Activated CD8-positive, alpha-beta T cell treated with anti-CD3 and anti-CD28 coated beads, Interleukin-2, amount 10 ng/mL, durations not matched to agents 7 days and 5 days (primary cell): ENCODE measurements at regions of chr11 and their contacts with region 1.

Region 1: GRCh38 chr11:288328-289144 is at the start of gene PGGHG:
- DNase-seq: peak; percentile 80
- ATAC-seq: peak; percentile 51
- H3K4me3 Mint-ChIP-seq: peak within 1 kb of the TSS; percentile 94
- H3K27ac Mint-ChIP-seq: peak within 1 kb of the TSS; percentile 97
- H3K4me1 Mint-ChIP-seq: peaks cover 61% of the 10 kb centered on the region
- H3K27me3 Mint-ChIP-seq: peaks cover 2% of the 10 kb centered on the region
- total RNA-seq, gene PGGHG: 487 to 541 TPM

Region 2: DNA sequence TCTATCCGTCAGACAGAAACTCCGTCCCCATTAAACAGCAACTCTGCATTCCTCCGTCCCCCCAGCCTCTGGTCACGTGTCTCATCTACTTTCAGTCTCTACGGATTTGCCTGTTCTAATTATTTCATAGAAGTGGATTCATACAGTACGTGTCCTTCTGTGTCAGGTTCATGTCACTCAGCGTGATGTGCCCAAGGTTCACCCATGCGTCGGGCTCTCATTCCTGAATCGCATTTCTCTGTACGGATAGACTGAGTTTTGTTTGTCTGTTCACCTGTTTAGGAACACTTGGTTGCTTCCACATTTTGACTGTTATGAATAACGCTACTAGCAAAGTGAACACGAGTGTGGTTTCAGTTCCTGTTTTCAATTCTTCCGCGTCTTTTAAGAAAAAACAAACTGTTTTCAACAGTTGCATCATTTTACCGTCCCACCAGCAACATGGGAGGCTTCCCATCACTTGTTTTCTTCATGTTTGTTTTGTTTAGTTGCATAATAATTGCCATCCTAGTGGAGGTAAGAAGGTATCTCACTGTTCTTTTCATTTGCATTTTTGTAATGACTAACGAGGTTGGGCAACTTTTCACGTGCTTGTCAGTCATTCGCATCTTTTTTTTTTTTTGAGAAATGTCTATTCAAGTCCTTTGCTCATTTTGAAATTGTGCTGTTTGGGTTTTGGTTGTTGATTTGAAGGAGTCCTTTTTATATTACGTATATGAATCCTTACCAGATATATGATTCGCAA is 19.2 kb before region 1 on chr11:
- CTCF ChIA-PET with region 1: interaction called, 31 read pairs
- POLR2A ChIA-PET with region 1: interaction called, 115 read pairs
- DNase-seq: peak; percentile 69
- ATAC-seq: peak; percentile 47
- H3K4me3 Mint-ChIP-seq: peak overlapping the region; percentile 75
- H3K27ac Mint-ChIP-seq: peak overlapping the region; percentile 92
- H3K4me1 Mint-ChIP-seq: peaks cover 35% of the 10 kb centered on the region
- H3K27me3 Mint-ChIP-seq: peaks cover 2% of the 10 kb centered on the region

Region 3: GRCh38 chr11:299951-300735 is 11.6 kb after region 1 on chr11:
- CTCF ChIA-PET with region 1: interaction called, 11 read pairs
- POLR2A ChIA-PET with region 1: interaction called, 97 read pairs
- DNase-seq: no peak
- ATAC-seq: no peak
- H3K4me3 Mint-ChIP-seq: no peak overlapping the region
- H3K27ac Mint-ChIP-seq: peak overlapping the region; percentile 46
- H3K4me1 Mint-ChIP-seq: peaks cover 76% of the 10 kb centered on the region
- H3K27me3 Mint-ChIP-seq: peaks cover 9% of the 10 kb centered on the region

Region 4: DNA sequence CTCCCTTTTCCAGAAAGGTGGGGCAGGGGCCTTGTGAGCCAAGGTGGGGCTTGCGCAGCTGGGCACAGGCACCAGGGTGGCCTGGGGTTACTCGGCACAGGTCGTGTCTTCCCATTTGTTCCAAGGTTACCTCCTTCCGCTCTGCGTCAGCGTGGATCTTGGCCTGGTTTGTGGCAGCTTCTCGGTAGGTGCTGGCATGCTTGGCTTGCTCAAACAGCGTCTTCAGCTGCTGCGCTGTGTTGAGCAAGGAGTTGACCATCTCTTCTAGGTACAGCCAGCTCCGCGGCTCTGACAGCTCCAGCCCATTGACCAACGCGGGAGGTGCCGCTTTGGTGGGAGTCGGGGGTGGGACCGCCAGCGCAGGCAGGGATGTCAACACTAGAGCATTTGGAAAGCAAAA is 385.9 kb after region 1 on chr11:
- CTCF ChIA-PET with region 1: no interaction called
- POLR2A ChIA-PET with region 1: no interaction called
- DNase-seq: no peak
- ATAC-seq: no peak
- H3K4me3 Mint-ChIP-seq: no peak overlapping the region
- H3K27ac Mint-ChIP-seq: no peak overlapping the region
- H3K4me1 Mint-ChIP-seq: no peaks in the 10 kb centered on the region
- H3K27me3 Mint-ChIP-seq: no peaks in the 10 kb centered on the region